Naive thymus-derived CD4-positive, alpha-beta T cell (primary cell): ENCODE measurements at regions of chrX and their contacts with region 1.

Region 1: DNA sequence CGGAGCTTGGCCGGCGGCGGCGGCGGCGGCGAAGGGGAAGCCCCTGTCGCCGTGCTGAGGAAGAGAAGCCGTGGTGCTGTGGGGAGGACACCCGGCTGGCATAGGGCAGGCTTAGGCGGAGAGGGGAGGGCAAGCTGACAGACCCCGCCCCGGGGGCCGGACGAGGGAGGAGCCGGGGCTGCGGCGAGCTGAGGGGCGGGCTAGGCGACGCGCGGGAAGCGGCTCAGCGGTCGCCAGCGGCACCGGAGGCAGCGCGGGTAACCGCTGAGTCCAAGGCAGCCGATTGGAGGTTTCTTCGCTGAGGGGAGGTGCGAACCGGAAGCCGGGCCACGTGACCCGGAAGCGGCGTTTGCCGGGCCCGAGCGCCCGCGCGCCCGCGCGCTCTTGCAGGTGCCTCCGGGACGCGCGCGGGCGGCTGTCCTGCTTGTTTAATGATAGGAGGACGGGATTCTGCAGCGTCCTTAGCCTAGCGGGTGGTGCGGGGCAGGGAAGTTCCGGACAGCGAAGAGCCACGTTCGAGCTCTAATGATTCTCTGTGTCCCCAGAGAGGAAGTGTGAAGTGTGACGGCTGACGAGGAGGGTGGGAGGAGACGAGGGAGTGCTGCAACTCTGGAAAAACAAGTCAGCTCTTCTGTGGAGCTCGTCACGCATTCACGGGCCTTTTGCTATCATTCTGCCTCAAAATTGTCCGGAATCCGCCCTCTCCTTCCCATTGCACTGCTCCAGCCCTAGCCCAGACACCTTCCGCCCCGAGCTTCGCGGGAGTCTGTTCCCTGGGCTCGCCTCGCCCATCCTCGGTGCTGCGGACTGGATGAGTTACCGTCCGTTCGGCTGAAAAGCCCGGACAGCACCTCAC is at the start of gene AP1S2:
- DNase-seq: peak; percentile 90 to 100 (median 99)
- ATAC-seq: peak; percentile 97
- H3K4me3 ChIP-seq: peak within 1 kb of the TSS; percentile 72
- H3K4me3 Mint-ChIP-seq: peak within 1 kb of the TSS; percentile 88 to 99 (median 94)
- H3K27ac ChIP-seq: peak within 1 kb of the TSS; percentile 87
- H3K27ac Mint-ChIP-seq: peak within 1 kb of the TSS; percentile 96 to 99 (median 98)
- H3K4me1 ChIP-seq: peaks cover 0 to 4% of the 10 kb centered on the region in 2 donors
- H3K4me1 Mint-ChIP-seq: peaks cover 3 to 35% (median 20%) of the 10 kb centered on the region in 7 donors
- H3K27me3 ChIP-seq: no peaks in the 10 kb centered on the region
- H3K27me3 Mint-ChIP-seq: peaks cover 0 to 4% (median 0%) of the 10 kb centered on the region in 5 donors
- total RNA-seq, gene AP1S2: 21.2 to 75.8 (median 25.4) TPM

Region 2: DNA sequence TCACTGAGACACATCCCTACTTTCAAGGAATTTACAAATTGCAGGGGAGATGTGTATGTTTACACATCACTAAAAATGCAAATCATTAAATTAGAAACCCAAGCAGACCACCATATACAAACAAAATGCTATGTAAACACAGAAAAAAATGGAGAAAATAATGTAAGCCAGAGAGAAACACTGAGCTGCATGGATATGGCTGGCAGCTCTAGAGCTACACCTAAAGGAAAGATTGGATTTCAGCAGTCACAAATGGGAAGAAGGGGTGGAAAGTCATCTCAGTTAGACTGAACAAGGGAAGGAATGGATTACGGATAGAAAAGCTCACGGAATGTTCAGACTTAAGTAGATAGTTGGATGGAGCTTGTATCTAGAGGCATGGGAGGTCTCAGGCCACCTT is 795.5 kb before region 1 on chrX:
- CTCF ChIA-PET with region 1: no interaction called
- POLR2A ChIA-PET with region 1: no interaction called
- intact Hi-C with region 1: no loop called
- DNase-seq: no peak
- ATAC-seq: no peak
- H3K4me3 ChIP-seq: no peak overlapping the region
- H3K4me3 Mint-ChIP-seq: no peak overlapping the region
- H3K27ac ChIP-seq: no peak overlapping the region
- H3K27ac Mint-ChIP-seq: no peak overlapping the region
- H3K4me1 ChIP-seq: no peaks in the 10 kb centered on the region
- H3K4me1 Mint-ChIP-seq: no peaks in the 10 kb centered on the region
- H3K27me3 ChIP-seq: no peaks in the 10 kb centered on the region
- H3K27me3 Mint-ChIP-seq: peaks cover 0 to 8% (median 0%) of the 10 kb centered on the region in 5 donors

Region 3: DNA sequence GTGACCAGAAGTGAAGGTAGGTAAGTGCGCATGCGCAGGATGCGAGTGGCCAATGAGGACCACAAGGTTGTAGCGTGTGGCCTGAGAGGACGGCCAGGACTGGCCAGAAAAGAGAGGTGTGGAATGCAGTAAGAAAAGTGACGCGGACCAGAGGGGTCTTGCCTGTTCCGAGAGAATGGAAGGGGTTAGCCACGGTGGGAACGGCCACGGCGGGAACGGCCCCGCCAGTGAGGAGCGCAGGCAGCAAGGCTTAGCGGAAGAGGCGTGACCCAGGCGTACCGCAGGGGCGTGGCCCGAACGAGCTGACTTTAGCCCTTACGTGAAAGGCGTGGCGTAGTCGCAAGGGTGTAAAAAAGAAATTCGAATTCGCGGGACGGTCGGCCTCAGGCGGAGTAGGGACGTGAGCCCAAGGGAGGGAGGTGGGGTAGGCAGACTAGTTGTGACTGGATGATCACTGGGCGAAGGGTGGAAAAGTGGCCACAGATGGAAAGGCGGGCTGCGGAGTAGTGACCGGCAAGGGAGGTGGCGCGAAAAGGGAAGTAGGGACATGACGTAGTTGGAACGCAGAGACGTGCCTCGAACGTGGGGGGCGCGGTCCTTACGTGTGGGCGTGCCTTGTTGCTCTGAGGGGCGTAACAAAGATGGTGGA is 180.0 kb before region 1 on chrX:
- CTCF ChIA-PET with region 1: no interaction called
- POLR2A ChIA-PET with region 1: interaction called, 12 read pairs
- intact Hi-C with region 1: loop called (anchors 1 kb)
- DNase-seq: peak; percentile 70 to 99 (median 96)
- ATAC-seq: peak; percentile 90
- H3K4me3 ChIP-seq: peak overlapping the region; percentile 87
- H3K4me3 Mint-ChIP-seq: no peak overlapping the region
- H3K27ac ChIP-seq: peak overlapping the region; percentile 96
- H3K27ac Mint-ChIP-seq: no peak overlapping the region
- H3K4me1 ChIP-seq: peaks cover 5 to 11% of the 10 kb centered on the region in 2 donors
- H3K4me1 Mint-ChIP-seq: peaks cover 0 to 17% (median 12%) of the 10 kb centered on the region in 7 donors
- H3K27me3 ChIP-seq: no peaks in the 10 kb centered on the region
- H3K27me3 Mint-ChIP-seq: peaks cover 0 to 5% (median 0%) of the 10 kb centered on the region in 5 donors

Region 4: DNA sequence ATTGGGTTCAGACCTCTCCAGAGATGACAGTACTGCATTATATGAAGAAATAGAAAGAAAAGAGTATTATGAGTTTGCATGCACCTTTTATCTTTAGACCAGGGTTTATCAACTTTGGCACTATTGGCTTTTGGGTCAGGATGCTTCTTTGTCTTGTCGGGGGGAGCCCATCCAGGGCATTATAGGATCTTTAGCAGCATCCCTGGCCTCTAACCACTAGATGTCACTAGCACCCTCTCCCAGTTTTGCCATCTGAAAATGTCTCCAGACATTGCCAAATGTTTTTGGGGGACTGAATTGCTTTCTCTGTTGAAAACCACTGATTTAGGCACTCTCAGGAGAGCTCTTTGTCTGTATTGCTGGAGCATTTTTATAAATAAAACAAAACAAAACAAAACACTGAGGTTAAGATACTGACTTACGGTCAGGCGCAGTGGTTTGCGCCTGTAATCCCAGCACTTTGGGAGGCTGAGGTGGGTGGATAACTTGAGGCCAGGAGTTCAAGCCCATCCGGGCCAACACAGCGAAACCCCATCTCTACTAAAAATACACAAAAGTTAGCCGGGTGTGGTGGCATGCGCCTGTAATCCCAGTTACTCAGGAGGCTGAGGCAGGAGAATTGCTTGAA is 93.3 kb before region 1 on chrX:
- CTCF ChIA-PET with region 1: no interaction called
- POLR2A ChIA-PET with region 1: no interaction called
- intact Hi-C with region 1: loop called in 1 of 2 experiments (anchors 1 kb)
- DNase-seq: peak in 7 of 9 donors; percentile 6 to 54 (median 43)
- ATAC-seq: peak; percentile 75
- H3K4me3 ChIP-seq: no peak overlapping the region
- H3K4me3 Mint-ChIP-seq: no peak overlapping the region
- H3K27ac ChIP-seq: peak overlapping the region; percentile 6
- H3K27ac Mint-ChIP-seq: peak overlapping the region in 8 of 9 donors; percentile 37 to 77 (median 68)
- H3K4me1 ChIP-seq: peaks cover 13 to 18% of the 10 kb centered on the region in 2 donors
- H3K4me1 Mint-ChIP-seq: peaks cover 11 to 49% (median 31%) of the 10 kb centered on the region in 7 donors
- H3K27me3 ChIP-seq: no peaks in the 10 kb centered on the region
- H3K27me3 Mint-ChIP-seq: no peaks in the 10 kb centered on the region

Region 5: DNA sequence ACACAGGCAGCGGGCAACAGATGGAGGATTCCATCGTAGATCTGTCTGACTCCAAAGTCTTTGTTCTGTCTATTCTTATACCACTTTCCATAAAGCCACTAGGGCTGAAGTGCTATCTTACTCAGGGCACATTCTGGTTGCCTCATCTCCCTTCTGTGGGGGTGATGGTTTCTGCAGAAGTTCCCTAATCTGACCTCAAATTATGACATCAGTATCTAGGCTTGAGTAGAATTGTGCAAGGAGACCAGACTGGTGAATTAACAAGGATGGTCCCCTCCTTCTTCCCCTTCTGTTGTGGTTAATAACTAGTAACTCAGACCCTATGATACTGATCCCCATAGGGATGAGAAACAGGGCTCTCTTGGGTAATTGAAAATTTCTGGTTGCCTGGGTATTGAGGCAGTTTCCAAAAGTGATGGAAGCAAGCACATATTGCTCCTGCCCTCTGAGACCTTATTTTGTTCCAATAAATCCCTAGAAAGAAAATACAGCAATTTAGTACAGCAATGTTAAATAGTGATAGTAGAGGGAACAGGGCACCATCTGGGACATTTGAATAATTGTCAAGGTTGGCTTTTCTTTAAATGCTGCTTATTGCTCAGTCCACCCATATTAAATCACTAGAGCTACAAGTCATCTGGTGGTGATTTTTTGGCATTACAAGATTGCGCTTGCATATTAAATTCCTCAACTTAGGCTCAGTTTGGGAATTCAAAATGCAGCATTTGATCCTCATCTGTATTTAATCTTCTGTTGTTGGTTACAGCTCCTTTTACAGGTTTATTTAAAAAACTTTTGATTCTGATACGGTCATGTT is 57.0 kb after region 1 on chrX:
- CTCF ChIA-PET with region 1: no interaction called
- POLR2A ChIA-PET with region 1: no interaction called
- intact Hi-C with region 1: loop called in 1 of 2 experiments (anchors 2 kb)
- DNase-seq: no peak
- ATAC-seq: peak; percentile 88
- H3K4me3 ChIP-seq: no peak overlapping the region
- H3K4me3 Mint-ChIP-seq: no peak overlapping the region
- H3K27ac ChIP-seq: no peak overlapping the region
- H3K27ac Mint-ChIP-seq: no peak overlapping the region
- H3K4me1 ChIP-seq: no peaks in the 10 kb centered on the region
- H3K4me1 Mint-ChIP-seq: peaks cover 0 to 5% (median 0%) of the 10 kb centered on the region in 7 donors
- H3K27me3 ChIP-seq: no peaks in the 10 kb centered on the region
- H3K27me3 Mint-ChIP-seq: peaks cover 0 to 4% (median 0%) of the 10 kb centered on the region in 5 donors

Region 6: GRCh38 chrX:16100673-16101072 is 245.7 kb after region 1 on chrX:
- CTCF ChIA-PET with region 1: no interaction called
- POLR2A ChIA-PET with region 1: no interaction called
- intact Hi-C with region 1: no loop called
- DNase-seq: no peak
- ATAC-seq: no peak
- H3K4me3 ChIP-seq: no peak overlapping the region
- H3K4me3 Mint-ChIP-seq: no peak overlapping the region
- H3K27ac ChIP-seq: no peak overlapping the region
- H3K27ac Mint-ChIP-seq: no peak overlapping the region
- H3K4me1 ChIP-seq: no peaks in the 10 kb centered on the region
- H3K4me1 Mint-ChIP-seq: peaks cover 0 to 2% (median 0%) of the 10 kb centered on the region in 7 donors
- H3K27me3 ChIP-seq: no peaks in the 10 kb centered on the region
- H3K27me3 Mint-ChIP-seq: peaks cover 0 to 8% (median 1%) of the 10 kb centered on the region in 5 donors

Region 7: DNA sequence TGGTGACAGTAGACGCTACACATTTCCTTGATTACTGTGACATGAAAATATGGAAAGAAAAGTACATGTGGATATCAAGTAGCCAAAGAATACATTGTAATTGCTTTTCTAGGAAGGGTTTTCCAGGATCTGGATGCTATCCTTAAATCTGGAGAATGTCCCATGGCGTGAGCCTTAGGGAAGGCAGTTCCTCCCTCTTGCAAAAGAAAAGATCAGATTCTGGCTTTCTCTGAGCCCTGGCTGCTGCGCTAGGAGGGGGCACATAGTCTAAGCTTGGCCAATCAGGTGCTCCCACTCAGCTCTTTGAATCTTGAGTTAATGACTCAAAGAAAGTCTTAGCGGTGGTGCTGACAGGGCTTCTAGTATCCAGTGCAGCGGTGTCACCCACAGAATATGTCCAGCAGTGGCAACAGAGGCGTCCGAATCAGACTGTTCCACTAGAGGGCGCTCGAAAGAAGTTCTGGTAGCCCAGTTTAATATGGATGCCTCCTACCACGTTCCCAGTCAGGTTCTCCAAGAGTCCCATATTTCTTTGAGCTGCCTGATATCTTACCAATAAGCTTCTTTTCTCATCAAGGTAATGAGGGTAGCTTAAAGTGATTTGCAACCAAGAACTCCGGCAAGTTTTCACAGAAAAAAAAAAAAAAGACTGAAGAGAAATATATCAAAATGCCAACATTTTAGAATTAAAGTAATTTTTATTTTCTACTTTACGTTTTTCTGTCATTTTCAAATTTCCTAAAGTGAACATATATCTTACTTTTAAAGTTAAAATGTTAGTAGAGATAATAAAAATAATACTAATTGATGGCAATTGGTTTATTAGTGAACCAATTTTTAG is 581.6 kb after region 1 on chrX:
- CTCF ChIA-PET with region 1: no interaction called
- POLR2A ChIA-PET with region 1: no interaction called
- intact Hi-C with region 1: loop called in 1 of 2 experiments (anchors 10 kb)
- DNase-seq: peak; percentile 19 to 55 (median 44)
- ATAC-seq: peak; percentile 78
- H3K4me3 ChIP-seq: no peak overlapping the region
- H3K4me3 Mint-ChIP-seq: peak overlapping the region in 1 of 10 donors; percentile 44
- H3K27ac ChIP-seq: no peak overlapping the region
- H3K27ac Mint-ChIP-seq: peak overlapping the region in 1 of 9 donors; percentile 0
- H3K4me1 ChIP-seq: peaks cover 0 to 15% of the 10 kb centered on the region in 2 donors
- H3K4me1 Mint-ChIP-seq: peaks cover 3 to 19% (median 15%) of the 10 kb centered on the region in 7 donors
- H3K27me3 ChIP-seq: no peaks in the 10 kb centered on the region
- H3K27me3 Mint-ChIP-seq: no peaks in the 10 kb centered on the region

Region 8: DNA sequence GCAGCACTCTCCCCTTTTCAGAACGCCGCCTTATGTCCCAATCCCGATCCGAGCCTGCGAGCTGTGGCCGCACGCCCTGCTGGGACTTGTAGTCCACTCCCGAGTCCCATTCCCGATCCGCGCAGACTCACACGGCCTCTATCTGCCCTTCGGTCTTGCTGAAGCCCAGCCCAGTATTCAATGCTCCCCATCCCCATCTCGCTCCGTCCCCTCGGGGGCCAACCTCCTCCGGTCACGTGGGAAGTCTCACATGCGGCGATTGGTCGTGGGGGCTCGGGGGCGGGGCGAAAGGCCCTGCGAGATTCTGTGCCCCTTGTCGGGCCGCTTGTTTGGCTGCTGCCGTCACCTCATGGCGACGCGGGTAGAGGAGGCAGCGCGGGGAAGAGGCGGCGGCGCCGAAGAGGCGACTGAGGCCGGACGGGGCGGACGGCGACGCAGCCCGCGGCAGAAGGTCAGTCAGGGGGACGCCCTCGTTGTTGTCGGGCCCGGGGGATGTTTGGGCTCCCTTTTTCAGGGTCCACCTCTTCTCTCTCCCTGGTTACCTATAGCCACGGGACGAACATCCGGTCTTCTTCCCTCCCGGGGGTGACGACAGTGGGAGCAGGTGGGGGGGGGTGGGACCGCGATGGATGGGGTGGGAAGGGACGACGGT is 931.3 kb after region 1 on chrX and contains the start of gene TXLNG:
- CTCF ChIA-PET with region 1: no interaction called
- POLR2A ChIA-PET with region 1: interaction called, 3 read pairs
- intact Hi-C with region 1: loop called (anchors 1 kb)
- DNase-seq: peak; percentile 81 to 98 (median 97)
- ATAC-seq: peak; percentile 97
- H3K4me3 ChIP-seq: peak within 1 kb of the TSS; percentile 94
- H3K4me3 Mint-ChIP-seq: peak within 1 kb of the TSS; percentile 95 to 99 (median 97)
- H3K27ac ChIP-seq: peak within 1 kb of the TSS; percentile 88
- H3K27ac Mint-ChIP-seq: peak within 1 kb of the TSS; percentile 78 to 94 (median 90)
- H3K4me1 ChIP-seq: peaks cover 0 to 3% of the 10 kb centered on the region in 2 donors
- H3K4me1 Mint-ChIP-seq: peaks cover 4 to 42% (median 12%) of the 10 kb centered on the region in 7 donors
- H3K27me3 ChIP-seq: no peaks in the 10 kb centered on the region
- H3K27me3 Mint-ChIP-seq: no peaks in the 10 kb centered on the region
- total RNA-seq, gene TXLNG: 11.9 to 23.1 (median 17.3) TPM